Left cardiac atrium (tissue), 4 donors: ENCODE measurements at regions of chrX and their contacts with region 1.

Region 1: DNA sequence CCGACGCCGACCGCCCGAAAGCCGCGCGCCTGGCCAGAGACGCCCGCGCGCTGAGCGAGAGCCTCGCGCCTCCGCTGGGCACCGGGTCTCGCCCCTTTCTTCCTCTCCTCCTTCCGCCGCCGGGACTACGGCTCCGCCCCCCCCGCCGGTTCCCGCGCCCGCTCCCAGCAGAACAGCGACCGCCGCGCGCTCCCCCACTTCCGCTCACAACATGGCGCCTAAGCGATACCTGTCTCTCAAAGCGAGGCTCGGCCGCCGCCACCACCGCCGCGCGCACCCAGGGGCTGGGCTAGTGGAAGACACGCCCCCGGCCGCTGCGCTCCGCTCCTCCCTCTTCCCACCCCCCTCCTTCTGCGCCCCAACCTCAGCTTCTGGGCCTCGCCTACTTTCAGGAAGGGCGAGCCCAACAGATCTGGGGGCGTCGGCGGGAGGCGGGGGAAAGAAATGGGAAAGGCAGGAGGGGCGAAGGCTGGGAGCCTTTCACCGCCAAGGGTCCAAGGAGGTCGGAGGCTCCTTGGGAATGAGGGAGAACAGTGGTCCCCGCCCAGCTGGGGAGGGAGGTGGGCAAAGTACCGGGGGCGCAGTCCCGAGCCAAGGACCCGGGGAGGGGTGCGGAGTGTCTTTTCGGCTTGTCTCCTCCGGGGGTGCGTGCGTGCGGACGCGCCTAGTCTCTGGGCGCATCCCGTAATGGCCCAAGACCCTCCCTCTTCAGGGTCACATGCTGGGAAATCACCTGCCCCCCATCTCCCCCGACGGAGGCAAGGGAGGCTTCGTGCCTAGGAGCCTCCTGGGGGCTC is at the start of gene RPS6KA3:
- DNase-seq: peak; percentile 91
- ATAC-seq: peak; percentile 94 to 95
- total RNA-seq, gene RPS6KA3: 31.0 to 36.3 TPM

Region 2: DNA sequence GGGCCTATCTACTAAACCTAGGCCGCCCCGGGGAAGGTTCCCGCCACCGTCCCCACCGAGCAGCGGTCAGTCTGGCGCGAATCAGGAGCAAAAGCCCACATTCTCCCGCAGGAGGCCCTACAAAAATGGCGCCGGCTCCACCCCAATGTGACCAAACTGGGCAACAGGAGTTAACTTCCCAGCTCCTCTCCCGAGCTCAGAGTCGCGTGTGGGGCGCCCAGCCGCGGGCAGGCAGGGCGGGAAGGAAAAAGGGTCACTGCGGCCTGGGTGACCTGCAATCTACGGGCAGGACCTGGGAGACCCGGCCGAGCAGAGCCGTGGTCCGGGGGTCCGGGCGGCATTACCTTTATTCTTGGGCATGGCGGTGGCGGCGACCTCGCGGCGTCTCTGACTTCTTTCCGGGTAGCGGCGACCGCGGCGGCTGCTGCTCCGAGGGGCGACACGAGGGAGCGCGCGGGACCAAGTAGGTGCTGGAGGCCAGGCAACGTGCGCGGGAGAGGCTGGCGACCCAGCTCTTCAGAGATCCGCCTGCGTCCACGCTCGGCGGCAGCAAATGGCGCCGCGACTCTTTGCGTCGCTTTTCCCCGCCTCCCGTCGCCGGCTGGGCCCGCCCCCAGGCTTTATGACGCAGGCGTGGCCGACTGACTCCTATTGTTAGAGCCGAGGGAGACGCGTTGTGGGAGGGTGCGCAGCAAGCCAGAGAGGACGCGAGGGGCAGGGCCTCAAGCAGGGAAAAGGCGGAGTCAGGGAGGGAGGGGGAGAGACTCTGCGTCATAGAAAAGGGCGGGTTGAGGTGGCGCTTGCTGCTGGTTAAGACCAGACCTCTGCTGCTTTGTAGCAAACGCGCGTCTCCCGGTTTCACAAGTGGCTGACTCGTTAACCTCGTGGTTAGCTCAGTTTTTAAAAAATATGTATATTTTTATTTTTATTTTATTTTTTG is 125.5 kb before region 1 on chrX and contains the start of gene EIF1AX:
- intact Hi-C with region 1: loop called in 1 of 2 experiments (anchors 10 kb)
- DNase-seq: peak; percentile 99
- ATAC-seq: peak; percentile 100
- total RNA-seq, gene EIF1AX: 53.2 to 88.5 TPM

Region 3: DNA sequence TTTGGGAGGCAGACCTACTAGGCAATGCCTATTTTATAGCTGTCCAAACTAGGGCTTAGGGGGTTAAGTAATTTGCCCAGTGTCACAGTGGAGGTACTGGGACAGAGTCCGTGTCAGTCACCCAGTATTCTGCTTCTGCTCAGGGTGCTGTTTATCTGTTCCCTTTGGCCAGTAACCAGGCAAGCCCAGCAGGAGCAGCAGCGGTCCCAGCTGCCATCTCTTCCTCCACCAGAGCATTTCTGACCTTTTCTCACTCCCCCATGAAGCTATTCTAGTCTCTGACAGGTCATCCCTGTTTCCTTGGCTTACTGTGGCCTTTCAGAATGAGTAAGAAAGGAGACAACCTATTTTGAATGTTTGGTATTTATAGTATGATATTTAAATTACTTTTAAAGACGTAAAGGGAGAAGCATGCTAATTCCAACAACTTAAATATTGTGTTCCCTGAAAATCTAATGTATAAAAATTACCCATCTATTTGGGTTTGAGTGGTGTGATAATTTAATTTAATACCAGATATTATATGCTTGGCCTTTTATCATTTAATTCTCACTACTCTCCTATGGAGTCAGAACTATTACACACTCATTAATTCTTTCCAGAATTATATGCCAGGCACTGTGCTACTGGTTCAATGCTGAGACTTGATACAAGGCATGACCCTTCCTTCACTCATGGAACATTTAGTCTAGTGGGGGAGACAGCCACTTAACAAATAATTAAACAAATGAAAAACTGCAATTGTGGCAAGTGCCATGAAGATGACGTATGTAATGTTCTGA is 60.9 kb before region 1 on chrX:
- intact Hi-C with region 1: loop called in 1 of 2 experiments (anchors 10 kb)
- DNase-seq: no peak
- ATAC-seq: peak; percentile 63 to 72

Region 4: DNA sequence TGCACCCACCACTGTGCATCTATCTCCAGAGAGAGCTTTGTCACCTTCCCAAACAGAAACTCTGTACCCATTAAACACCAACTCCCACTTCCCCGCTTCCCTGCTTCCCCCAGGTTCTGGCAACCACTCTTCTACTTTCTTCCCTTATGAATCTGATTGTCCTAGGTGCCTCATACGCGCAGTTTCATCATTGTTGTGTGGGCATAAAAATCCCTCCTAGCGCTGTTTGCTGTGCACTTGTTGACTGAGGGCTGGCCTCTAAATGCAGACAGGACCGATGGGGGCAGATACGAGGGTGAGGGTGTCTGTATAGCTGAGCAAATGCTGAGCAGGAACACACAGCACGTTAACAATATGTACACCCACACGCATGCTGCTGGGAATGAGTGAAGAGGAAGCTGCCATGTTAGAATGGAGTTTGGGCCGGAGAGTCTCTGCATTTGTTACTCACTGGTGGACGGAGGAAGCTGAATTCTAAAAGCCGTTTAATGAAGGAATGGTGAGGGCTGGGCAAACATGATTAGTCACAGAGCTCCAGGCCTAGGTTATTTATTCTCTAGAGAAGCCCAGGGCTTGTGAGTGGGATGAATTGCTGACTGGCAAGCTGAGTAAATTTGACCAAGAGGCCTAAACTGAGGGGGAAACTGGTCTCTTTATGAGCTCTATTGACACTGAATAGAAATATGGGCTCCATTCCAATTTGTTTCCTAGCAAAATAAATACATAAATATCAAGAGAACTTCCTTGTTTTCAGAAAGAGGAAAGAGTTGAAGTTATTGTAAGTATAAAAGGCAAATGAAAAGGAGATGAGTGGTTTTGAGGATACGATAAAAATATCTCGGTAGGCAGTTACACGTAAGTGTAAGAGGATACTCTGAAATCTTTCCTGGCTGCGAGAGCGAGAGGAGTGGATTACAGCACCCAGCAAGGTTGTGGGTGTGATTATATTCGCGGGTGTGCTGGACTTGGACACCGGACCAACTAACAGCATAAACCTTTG is 95.6 kb after region 1 on chrX:
- intact Hi-C with region 1: loop called in 1 of 2 experiments (anchors 10 kb)
- DNase-seq: no peak
- ATAC-seq: peak; percentile 88 to 93